B cell (primary cell): ENCODE measurements at regions of chrX and their contacts with region 1.

Region 1: DNA sequence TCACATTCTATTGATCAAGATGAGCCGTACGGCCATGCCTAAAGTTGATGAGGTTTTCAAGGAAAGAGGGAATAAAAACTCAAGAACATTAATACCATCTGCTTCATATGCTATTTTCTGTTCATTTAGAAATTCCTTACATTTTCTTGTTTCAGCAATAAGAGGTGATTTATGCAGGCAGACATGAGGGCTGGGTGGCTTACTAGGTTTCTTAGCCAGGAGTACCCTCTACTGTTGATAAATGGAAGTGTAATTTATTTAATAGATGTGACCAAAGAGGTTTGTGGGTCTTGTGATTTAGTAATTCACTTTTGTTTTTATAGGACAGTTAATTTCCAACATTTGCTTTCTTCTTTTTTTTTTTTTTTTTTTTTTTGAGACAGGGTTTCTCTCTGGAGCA is 6.4 kb upstream of the SMIM9 start:
- DNase-seq: peak; percentile 63
- ATAC-seq: peak; percentile 65
- H3K4me3 ChIP-seq: no peak overlapping the region
- H3K4me3 Mint-ChIP-seq: no peak overlapping the region
- H3K27ac ChIP-seq: no peak overlapping the region
- H3K27ac Mint-ChIP-seq: no peak overlapping the region
- H3K4me1 ChIP-seq: no peaks in the 10 kb centered on the region
- H3K4me1 Mint-ChIP-seq: no peaks in the 10 kb centered on the region
- H3K27me3 ChIP-seq: no peaks in the 10 kb centered on the region
- H3K27me3 Mint-ChIP-seq: no peaks in the 10 kb centered on the region
- CTCF ChIP-seq: peak; percentile 65

Region 2: GRCh38 chrX:154714925-154715324 is 125.9 kb before region 1 on chrX:
- CTCF ChIA-PET with region 1: interaction called, 3 read pairs
- POLR2A ChIA-PET with region 1: no interaction called
- intact Hi-C with region 1: loop called (anchors 10 kb)
- DNase-seq: peak; percentile 63
- ATAC-seq: peak; percentile 66
- H3K4me3 ChIP-seq: no peak overlapping the region
- H3K4me3 Mint-ChIP-seq: no peak overlapping the region
- H3K27ac ChIP-seq: no peak overlapping the region
- H3K27ac Mint-ChIP-seq: no peak overlapping the region
- H3K4me1 ChIP-seq: peaks cover 28 to 31% of the 10 kb centered on the region in 2 donors
- H3K4me1 Mint-ChIP-seq: peaks cover 50% of the 10 kb centered on the region
- H3K27me3 ChIP-seq: no peaks in the 10 kb centered on the region
- H3K27me3 Mint-ChIP-seq: no peaks in the 10 kb centered on the region
- CTCF ChIP-seq: peak; percentile 78